ENCODE measurements at regions of chr3 and their contacts with region 1.

Region 1: GRCh38 chr3:177190756-177191681 is 6.3 kb downstream of the TBL1XR1 start:
- DNase-seq: no peak
- ATAC-seq: peak in 5 of 8 donors; percentile 19 to 43 (median 25)
- H3K4me3 ChIP-seq: no peak overlapping the region
- H3K27ac ChIP-seq: peak overlapping the region in 9 of 10 donors; percentile 6 to 72 (median 46)
- H3K4me1 ChIP-seq: peaks cover 0 to 82% (median 48%) of the 10 kb centered on the region in 9 donors
- H3K27me3 ChIP-seq: no peaks in the 10 kb centered on the region
- CTCF ChIP-seq: no peak

Region 2: DNA sequence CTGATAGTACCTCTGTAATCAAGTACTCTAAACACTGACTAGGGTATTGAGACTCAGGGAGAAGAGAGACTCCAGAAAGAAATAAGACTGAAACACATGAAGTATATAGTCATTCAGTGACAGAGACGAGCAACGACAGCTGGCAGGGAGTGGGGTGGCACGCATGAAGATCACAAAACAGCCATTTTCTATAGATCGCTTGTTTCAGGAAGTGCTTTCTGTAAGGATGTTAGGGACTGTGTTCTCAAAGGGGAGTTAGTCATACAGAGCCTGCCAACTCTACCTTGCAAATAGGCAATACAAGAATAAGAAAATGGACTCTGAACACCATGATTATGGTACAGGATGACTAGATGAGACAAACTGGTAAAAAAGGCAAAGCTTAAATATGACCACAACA is 133.3 kb before region 1 on chr3:
- intact Hi-C with region 1: loop called in 8 of 10 experiments (anchors 2 to 10 kb)
- DNase-seq: no peak
- ATAC-seq: no peak
- H3K4me3 ChIP-seq: no peak overlapping the region
- H3K27ac ChIP-seq: no peak overlapping the region
- H3K4me1 ChIP-seq: peaks cover 0 to 70% (median 43%) of the 10 kb centered on the region in 9 donors
- H3K27me3 ChIP-seq: no peaks in the 10 kb centered on the region
- CTCF ChIP-seq: no peak

Region 3: DNA sequence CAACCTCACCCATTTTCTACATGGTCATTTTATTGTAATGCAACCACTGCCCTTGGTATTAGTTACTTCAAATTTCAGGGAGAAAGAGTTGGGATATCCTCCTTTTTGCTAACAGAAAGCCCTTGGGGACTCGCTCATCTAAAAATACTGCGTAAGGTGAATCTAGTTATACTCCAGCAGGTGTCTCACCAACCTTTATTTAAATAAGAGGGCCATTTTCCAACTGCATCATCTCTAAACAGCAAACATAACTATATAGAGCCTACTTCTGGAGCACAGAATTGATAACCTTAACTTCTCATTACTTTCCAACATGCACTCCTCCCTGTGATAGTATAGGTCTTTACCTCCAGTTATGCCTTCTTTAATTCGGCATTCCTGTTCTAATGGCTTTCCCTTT is 71.2 kb before region 1 on chr3:
- intact Hi-C with region 1: loop called in 2 of 10 experiments (anchors 2 to 10 kb)
- DNase-seq: no peak
- ATAC-seq: no peak
- H3K4me3 ChIP-seq: no peak overlapping the region
- H3K27ac ChIP-seq: no peak overlapping the region
- H3K4me1 ChIP-seq: peaks cover 4 to 90% (median 55%) of the 10 kb centered on the region in 9 donors
- H3K27me3 ChIP-seq: no peaks in the 10 kb centered on the region
- CTCF ChIP-seq: no peak

Region 4: DNA sequence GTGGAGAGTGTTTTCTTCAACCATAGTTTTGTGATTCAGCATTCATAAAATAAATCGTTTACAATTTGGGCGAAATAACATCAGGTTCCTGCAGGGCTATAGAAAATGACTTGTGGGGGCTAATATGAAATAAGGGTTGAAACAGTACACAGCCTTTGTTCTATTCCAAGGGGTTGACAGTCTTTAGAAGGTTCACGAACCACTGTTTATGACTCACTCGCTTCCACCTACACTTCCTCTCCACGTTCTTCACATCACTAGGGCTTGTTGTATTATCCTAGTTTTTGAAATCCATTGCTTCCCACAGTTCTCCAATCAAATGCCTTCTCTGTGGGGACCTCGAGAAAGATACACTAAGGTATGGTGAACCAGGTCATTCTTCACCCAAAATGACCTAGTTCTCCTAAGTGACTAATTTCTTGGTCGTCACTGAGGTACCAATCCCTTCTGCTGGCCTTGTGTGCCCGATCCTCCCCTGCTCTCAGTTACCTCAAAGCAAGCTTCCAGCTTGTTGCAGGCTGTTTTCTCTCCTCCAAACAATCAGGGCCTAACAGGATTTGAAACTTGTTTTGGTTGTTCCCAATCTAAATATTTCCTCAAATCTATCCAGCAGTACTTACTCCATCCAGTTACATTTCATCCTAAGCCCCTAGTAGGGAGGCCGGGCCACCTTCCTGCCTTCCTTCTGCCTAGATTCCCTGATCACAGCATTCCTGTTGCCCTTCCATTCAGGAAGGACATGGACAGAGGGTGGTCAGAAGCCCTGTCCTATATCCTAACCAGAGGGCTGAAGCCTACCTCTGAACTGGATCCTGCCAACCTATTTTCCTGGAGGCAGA is 29.3 kb after region 1 on chr3:
- intact Hi-C with region 1: no loop called
- DNase-seq: no peak
- ATAC-seq: no peak
- H3K4me3 ChIP-seq: no peak overlapping the region
- H3K27ac ChIP-seq: no peak overlapping the region
- H3K4me1 ChIP-seq: peaks cover 0 to 12% (median 0%) of the 10 kb centered on the region in 9 donors
- H3K27me3 ChIP-seq: no peaks in the 10 kb centered on the region
- CTCF ChIP-seq: no peak